ENCODE measurements at regions of chr15 and their contacts with region 1.

Region 1: DNA sequence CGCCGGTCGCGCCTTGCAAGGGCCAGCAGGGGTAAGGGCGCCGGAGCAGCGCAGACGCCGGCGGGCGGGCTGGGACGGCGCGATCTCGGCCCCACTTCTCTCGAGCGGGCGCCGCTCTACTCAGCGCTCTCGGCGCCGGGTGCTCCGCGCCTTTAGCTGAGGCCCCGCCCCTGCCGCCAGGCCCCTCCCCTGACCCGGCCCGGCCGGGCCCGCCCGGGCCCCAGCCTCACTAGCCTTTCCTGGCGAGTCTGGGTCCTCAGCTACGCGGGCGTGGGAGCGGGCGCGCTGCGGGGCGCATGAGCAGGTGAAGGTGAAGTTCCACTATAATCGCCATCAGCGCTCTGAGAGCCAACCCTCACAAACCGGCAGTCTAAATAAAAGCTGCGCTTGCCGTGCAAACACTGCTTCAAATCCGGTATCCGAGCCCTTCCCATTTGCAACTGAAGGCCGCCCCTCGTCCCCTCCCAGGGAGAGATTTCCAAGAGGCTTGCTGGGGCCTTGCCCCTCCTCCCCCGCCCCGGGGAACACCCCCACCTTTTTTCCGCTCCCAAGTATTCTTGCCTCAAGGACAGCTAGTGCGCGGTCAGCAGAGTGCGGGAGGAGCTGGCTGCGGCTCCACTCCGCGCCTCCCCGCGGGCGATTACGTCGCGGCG is at the start of gene RPP25:
- DNase-seq: peak; percentile 90 to 93
- ATAC-seq: peak; percentile 92
- H3K4me3 ChIP-seq: peak within 1 kb of the TSS; percentile 36 to 37
- H3K27ac ChIP-seq: peak within 1 kb of the TSS in 1 of 2 donors; percentile 82
- H3K4me1 ChIP-seq: no peaks in the 10 kb centered on the region
- H3K27me3 ChIP-seq: no peaks in the 10 kb centered on the region
- total RNA-seq, gene RPP25: 3.6 to 5.8 TPM

Region 2: GRCh38 chr15:74635228-74635627 is 321.5 kb before region 1 on chr15:
- intact Hi-C with region 1: loop called (anchors 10 kb)
- DNase-seq: peak in 1 of 2 donors; percentile 88
- ATAC-seq: peak; percentile 75
- H3K4me3 ChIP-seq: no peak overlapping the region
- H3K27ac ChIP-seq: no peak overlapping the region
- H3K4me1 ChIP-seq: no peaks in the 10 kb centered on the region
- H3K27me3 ChIP-seq: no peaks in the 10 kb centered on the region

Region 3: GRCh38 chr15:74995241-74995778 is 38.5 kb after region 1 on chr15 and contains the start of gene SCAMP5:
- intact Hi-C with region 1: loop called in 1 of 2 experiments (anchors 2 kb)
- DNase-seq: peak; percentile 96
- ATAC-seq: peak; percentile 96
- H3K4me3 ChIP-seq: peak within 1 kb of the TSS; percentile 1 to 54
- H3K27ac ChIP-seq: no peak within 1 kb of the TSS
- H3K4me1 ChIP-seq: no peaks in the 10 kb centered on the region
- H3K27me3 ChIP-seq: no peaks in the 10 kb centered on the region
- total RNA-seq, gene SCAMP5: 3.7 to 5.8 TPM

Region 4: GRCh38 chr15:75201609-75202250 is 245.0 kb after region 1 on chr15 and contains the start of gene C15orf39:
- intact Hi-C with region 1: loop called in 1 of 2 experiments (anchors 5 kb)
- DNase-seq: peak; percentile 80 to 92
- ATAC-seq: peak; percentile 88
- H3K4me3 ChIP-seq: peak within 1 kb of the TSS; percentile 60 to 63
- H3K27ac ChIP-seq: peak within 1 kb of the TSS in 1 of 2 donors; percentile 60
- H3K4me1 ChIP-seq: no peaks in the 10 kb centered on the region
- H3K27me3 ChIP-seq: no peaks in the 10 kb centered on the region
- total RNA-seq, gene C15orf39: 24.6 to 26.8 TPM

Measured in aorta (tissue), 5 donors.